HepG2 (cell line): ENCODE measurements at regions of chr22 and their contacts with region 1.

Region 1: GRCh38 chr22:33579448-33580093 is 340.7 kb downstream of the LARGE1 start:
- DNase-seq: peak; percentile 81
- ATAC-seq: peak; percentile 91
- H3K4me3 ChIP-seq: no peak overlapping the region
- H3K27ac ChIP-seq: peak overlapping the region; percentile 90
- H3K4me1 ChIP-seq: peaks cover 54% of the 10 kb centered on the region
- H3K27me3 ChIP-seq: no peaks in the 10 kb centered on the region
- CTCF ChIP-seq: peak; percentile 97
- EP300 ChIP-seq: no peak
- POLR2A ChIP-seq: no peak
- RAD21 ChIP-seq: peak; percentile 97

Region 2: GRCh38 chr22:33332538-33332937 is 247.0 kb before region 1 on chr22:
- CTCF ChIA-PET with region 1: no interaction called
- POLR2A ChIA-PET with region 1: interaction called, 6 read pairs
- in situ Hi-C with region 1: no loop called
- intact Hi-C with region 1: loop called (anchors 10 kb)
- DNase-seq: no peak
- ATAC-seq: peak; percentile 15; the same call in 1 of the 3 replicates
- H3K4me3 ChIP-seq: no peak overlapping the region
- H3K27ac ChIP-seq: peak overlapping the region; percentile 37
- H3K4me1 ChIP-seq: peaks cover 82% of the 10 kb centered on the region
- H3K27me3 ChIP-seq: no peaks in the 10 kb centered on the region
- CTCF ChIP-seq: no peak
- EP300 ChIP-seq: no peak
- POLR2A ChIP-seq: no peak
- RAD21 ChIP-seq: no peak

Region 3: DNA sequence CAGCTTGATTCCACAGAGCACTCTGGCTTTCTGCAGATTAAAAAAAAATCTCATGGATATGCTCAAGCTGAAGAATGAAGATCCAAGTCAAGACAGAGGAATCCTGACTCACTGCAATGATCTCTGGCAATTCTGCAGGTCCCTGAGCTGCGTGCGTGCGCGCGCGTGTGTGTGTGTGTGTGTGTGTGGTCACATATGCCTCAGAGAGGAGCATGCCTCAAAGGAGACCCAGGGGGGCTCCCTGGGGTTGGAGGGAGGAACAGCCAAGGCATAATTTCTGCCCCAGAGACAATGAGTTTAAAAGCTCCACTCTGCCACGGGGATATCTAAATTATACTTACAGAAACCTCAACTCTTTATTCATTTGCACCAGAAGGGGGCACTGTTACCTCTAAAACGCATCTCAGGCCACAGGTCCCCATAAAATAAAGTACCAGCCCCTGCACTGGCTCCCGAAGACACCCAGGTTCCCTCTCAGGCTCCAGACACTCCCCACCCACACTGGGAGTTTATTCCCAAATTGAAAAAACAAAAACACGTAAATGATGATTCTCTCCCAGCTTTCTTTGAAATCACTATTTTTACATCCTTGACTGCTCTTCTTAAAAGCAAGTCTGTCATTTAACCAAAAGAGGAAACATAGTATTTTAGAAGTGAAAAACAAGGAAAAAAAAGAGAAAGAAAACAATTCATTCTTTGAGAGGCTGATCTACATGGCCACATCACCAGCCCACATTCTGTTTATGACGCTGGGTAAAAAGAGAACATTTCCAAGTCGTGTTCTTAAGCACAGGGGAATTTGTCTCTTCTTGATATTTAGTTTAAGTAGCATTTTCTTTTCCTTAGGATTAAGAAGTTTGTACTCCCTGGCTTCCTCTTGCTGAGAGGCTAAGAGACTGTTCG is 60.2 kb before region 1 on chr22:
- CTCF ChIA-PET with region 1: interaction called, 76 read pairs
- POLR2A ChIA-PET with region 1: interaction called, 19 read pairs
- in situ Hi-C with region 1: loop called (anchors 5 kb)
- intact Hi-C with region 1: loop called (anchors 1 kb)
- DNase-seq: peak; percentile 73
- ATAC-seq: peak; percentile 77
- H3K4me3 ChIP-seq: no peak overlapping the region
- H3K27ac ChIP-seq: peak overlapping the region; percentile 51
- H3K4me1 ChIP-seq: peaks cover 91% of the 10 kb centered on the region
- H3K27me3 ChIP-seq: no peaks in the 10 kb centered on the region
- CTCF ChIP-seq: peak; percentile 79
- EP300 ChIP-seq: no peak
- POLR2A ChIP-seq: no peak
- RAD21 ChIP-seq: peak; percentile 90

Region 4: DNA sequence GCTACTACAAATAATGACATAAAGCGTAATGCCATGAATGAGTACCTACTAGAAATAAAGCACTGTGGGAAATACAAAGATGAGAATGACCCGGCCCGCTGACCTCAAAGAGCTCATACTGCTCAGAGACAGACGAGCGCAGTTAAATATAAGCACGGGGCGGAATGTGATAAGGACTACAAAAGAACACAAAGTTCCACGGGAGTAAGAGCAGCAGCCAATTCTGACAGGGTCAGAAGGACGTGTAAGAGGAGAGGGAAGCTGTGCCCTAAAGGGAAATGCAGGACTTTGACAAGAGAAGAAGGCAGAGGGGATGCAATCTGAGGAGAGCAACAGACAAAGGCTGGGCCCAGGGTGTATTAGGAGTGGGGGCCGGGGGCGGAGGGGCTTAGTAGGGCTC is 26.1 kb after region 1 on chr22:
- CTCF ChIA-PET with region 1: no interaction called
- POLR2A ChIA-PET with region 1: no interaction called
- in situ Hi-C with region 1: no loop called
- intact Hi-C with region 1: no loop called
- DNase-seq: no peak
- ATAC-seq: no peak
- H3K4me3 ChIP-seq: no peak overlapping the region
- H3K27ac ChIP-seq: no peak overlapping the region
- H3K4me1 ChIP-seq: no peaks in the 10 kb centered on the region
- H3K27me3 ChIP-seq: no peaks in the 10 kb centered on the region
- CTCF ChIP-seq: no peak
- EP300 ChIP-seq: no peak
- POLR2A ChIP-seq: no peak
- RAD21 ChIP-seq: no peak

Region 5: GRCh38 chr22:34122042-34122441 is 542.5 kb after region 1 on chr22:
- CTCF ChIA-PET with region 1: no interaction called
- POLR2A ChIA-PET with region 1: no interaction called
- in situ Hi-C with region 1: no loop called
- intact Hi-C with region 1: no loop called
- DNase-seq: no peak
- ATAC-seq: no peak
- H3K4me3 ChIP-seq: no peak overlapping the region
- H3K27ac ChIP-seq: no peak overlapping the region
- H3K4me1 ChIP-seq: no peaks in the 10 kb centered on the region
- H3K27me3 ChIP-seq: no peaks in the 10 kb centered on the region
- CTCF ChIP-seq: no peak
- EP300 ChIP-seq: no peak
- POLR2A ChIP-seq: no peak
- RAD21 ChIP-seq: no peak